Left ventricle myocardium inferior (tissue), 1 donor: ENCODE measurements at regions of chr3 and their contacts with region 1.

Region 1: GRCh38 chr3:86774082-86774691 is 216.8 kb downstream of the VGLL3 start:
- DNase-seq: no peak
- H3K4me3 ChIP-seq: no peak overlapping the region
- H3K27ac ChIP-seq: no peak overlapping the region
- H3K4me1 ChIP-seq: no peaks in the 10 kb centered on the region
- H3K27me3 ChIP-seq: no peaks in the 10 kb centered on the region
- CTCF ChIP-seq: peak; percentile 55

Region 2: DNA sequence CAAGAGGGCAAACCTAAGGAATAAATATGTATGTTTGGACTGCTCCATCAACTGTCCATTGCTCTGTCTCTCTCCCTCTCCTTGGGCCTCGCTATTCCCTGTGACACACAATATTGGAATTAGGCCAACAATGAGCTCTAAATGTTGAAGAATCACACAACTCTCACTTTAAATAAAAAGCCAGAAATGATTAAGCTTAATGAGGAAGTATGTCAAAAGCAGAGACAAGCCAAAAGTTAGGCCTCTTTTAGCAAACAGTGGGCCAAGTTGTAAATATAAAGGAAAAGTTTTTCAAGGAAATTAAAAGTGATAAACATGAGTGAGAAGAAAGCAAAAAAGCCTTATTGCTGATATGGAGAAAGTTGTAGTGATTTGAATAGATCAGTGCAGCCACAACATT is 75.8 kb after region 1 on chr3:
- intact Hi-C with region 1: no loop called
- DNase-seq: no peak
- H3K4me3 ChIP-seq: no peak overlapping the region
- H3K27ac ChIP-seq: no peak overlapping the region
- H3K4me1 ChIP-seq: no peaks in the 10 kb centered on the region
- H3K27me3 ChIP-seq: no peaks in the 10 kb centered on the region
- CTCF ChIP-seq: no peak

Region 3: GRCh38 chr3:87025661-87026635 is 251.8 kb after region 1 on chr3:
- intact Hi-C with region 1: no loop called
- DNase-seq: no peak
- H3K4me3 ChIP-seq: no peak overlapping the region
- H3K27ac ChIP-seq: no peak overlapping the region
- H3K4me1 ChIP-seq: no peaks in the 10 kb centered on the region
- H3K27me3 ChIP-seq: no peaks in the 10 kb centered on the region
- CTCF ChIP-seq: no peak

Region 4: GRCh38 chr3:87082796-87083440 is 308.7 kb after region 1 on chr3:
- intact Hi-C with region 1: loop called (anchors 5 kb)
- DNase-seq: no peak
- H3K4me3 ChIP-seq: no peak overlapping the region
- H3K27ac ChIP-seq: no peak overlapping the region
- H3K4me1 ChIP-seq: no peaks in the 10 kb centered on the region
- H3K27me3 ChIP-seq: no peaks in the 10 kb centered on the region
- CTCF ChIP-seq: peak; percentile 60